GM12878 (cell line): ENCODE measurements at regions of chr5 and their contacts with region 1.

Region 1: GRCh38 chr5:106116689-106117088 is 1554.0 kb downstream of the EFNA5 start:
- DNase-seq: no peak
- ATAC-seq: no peak
- H3K4me3 ChIP-seq: no peak overlapping the region
- H3K27ac ChIP-seq: no peak overlapping the region
- H3K4me1 ChIP-seq: no peaks in the 10 kb centered on the region
- H3K27me3 ChIP-seq: no peaks in the 10 kb centered on the region
- CTCF ChIP-seq: no peak
- EP300 ChIP-seq: no peak
- POLR2A ChIP-seq: no peak
- RAD21 ChIP-seq: no peak

Region 2: DNA sequence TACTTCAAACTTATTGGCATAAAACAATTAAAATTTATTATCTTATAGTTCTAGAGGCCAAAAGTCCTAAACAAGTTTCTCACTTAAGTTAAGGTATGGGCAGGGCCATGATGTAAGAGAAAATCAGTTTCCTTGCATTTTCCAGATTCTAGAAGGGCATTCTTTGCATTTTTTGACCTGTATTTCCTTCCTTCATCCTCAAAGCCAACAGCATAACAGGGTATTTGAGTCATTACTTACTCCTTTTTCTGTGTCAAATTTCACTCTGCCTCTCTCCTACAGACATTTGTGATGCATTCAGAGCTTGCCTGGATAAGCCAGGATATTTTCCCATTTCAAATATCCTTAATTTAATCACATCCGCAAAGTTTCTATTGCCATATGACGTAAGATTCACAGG is 55.0 kb after region 1 on chr5:
- CTCF ChIA-PET with region 1: no interaction called
- POLR2A ChIA-PET with region 1: no interaction called
- RAD21 ChIA-PET with region 1: no interaction called
- SMC1A ChIA-PET with region 1: no interaction called
- in situ Hi-C with region 1: no loop called
- intact Hi-C with region 1: no loop called
- DNase-seq: no peak
- ATAC-seq: no peak
- H3K4me3 ChIP-seq: no peak overlapping the region
- H3K27ac ChIP-seq: no peak overlapping the region
- H3K4me1 ChIP-seq: no peaks in the 10 kb centered on the region
- H3K27me3 ChIP-seq: no peaks in the 10 kb centered on the region
- CTCF ChIP-seq: no peak
- EP300 ChIP-seq: no peak
- POLR2A ChIP-seq: no peak
- RAD21 ChIP-seq: no peak

Region 3: DNA sequence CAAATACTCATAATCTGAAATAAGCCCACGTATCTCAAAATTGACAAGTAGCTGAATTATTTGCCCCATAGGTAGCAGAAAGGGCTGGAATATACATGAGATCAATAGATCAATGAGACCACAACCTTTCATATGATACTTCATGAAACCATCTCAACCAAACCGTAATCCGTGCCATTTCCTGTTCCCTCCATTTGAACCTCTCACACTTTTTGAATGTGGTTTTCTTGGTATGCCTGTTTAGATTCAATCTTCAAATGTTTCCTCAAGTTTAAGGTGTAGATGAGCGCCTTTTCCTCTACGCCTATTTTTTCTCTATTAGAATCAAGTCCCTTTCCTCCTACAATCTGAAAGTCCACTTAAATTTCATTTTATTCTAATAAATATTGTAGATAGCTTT is 748.6 kb after region 1 on chr5:
- CTCF ChIA-PET with region 1: no interaction called
- POLR2A ChIA-PET with region 1: no interaction called
- RAD21 ChIA-PET with region 1: no interaction called
- SMC1A ChIA-PET with region 1: no interaction called
- in situ Hi-C with region 1: no loop called
- intact Hi-C with region 1: loop called (anchors 5 kb)
- DNase-seq: no peak
- ATAC-seq: no peak
- H3K4me3 ChIP-seq: no peak overlapping the region
- H3K27ac ChIP-seq: no peak overlapping the region
- H3K4me1 ChIP-seq: no peaks in the 10 kb centered on the region
- H3K27me3 ChIP-seq: no peaks in the 10 kb centered on the region
- CTCF ChIP-seq: no peak
- EP300 ChIP-seq: no peak
- POLR2A ChIP-seq: no peak
- RAD21 ChIP-seq: no peak